Common myeloid progenitor, CD34-positive (primary cell): ENCODE measurements at regions of chr11 and their contacts with region 1.

Region 1: DNA sequence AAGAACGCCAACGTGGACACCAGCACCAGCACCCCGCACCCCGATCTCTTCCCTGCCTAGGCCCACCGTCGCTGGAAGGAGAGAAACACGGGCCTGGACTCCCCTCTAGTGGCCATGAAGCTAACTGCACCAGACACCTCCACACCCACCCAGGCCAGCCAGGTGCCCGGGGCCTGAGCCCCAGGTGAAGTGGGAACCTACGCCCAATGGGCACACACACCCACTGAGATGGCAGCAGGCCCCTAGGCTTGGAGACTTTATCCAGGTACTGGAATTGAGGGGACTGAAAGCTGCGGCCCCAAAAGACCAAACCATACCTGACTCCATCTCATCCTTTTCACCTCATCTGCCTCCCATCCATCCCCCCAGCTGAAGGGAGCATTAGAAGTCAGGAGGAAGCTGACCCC is 81.0 kb downstream of the BUD13 start:
- DNase-seq: peak; percentile 33 to 54 (median 44)
- H3K4me3 ChIP-seq: no peak overlapping the region
- H3K27ac ChIP-seq: no peak overlapping the region
- H3K4me1 ChIP-seq: peaks cover 0 to 12% (median 4%) of the 10 kb centered on the region in 4 experiments
- H3K27me3 ChIP-seq: no peaks in the 10 kb centered on the region

Region 2: GRCh38 chr11:116454020-116454645 is 237.6 kb before region 1 on chr11:
- CTCF ChIA-PET with region 1: interaction called, 10 read pairs
- POLR2A ChIA-PET with region 1: no interaction called
- DNase-seq: peak; percentile 22 to 57 (median 48)
- H3K4me3 ChIP-seq: no peak overlapping the region
- H3K27ac ChIP-seq: no peak overlapping the region
- H3K4me1 ChIP-seq: no peaks in the 10 kb centered on the region
- H3K27me3 ChIP-seq: peaks cover 0 to 7% (median 2%) of the 10 kb centered on the region in 5 experiments

Region 3: GRCh38 chr11:116513894-116514293 is 177.9 kb before region 1 on chr11:
- CTCF ChIA-PET with region 1: interaction called, 18 read pairs
- POLR2A ChIA-PET with region 1: no interaction called
- DNase-seq: peak; percentile 36 to 60 (median 59)
- H3K4me3 ChIP-seq: no peak overlapping the region
- H3K27ac ChIP-seq: no peak overlapping the region
- H3K4me1 ChIP-seq: no peaks in the 10 kb centered on the region
- H3K27me3 ChIP-seq: peaks cover 0 to 8% (median 3%) of the 10 kb centered on the region in 5 experiments

Region 4: DNA sequence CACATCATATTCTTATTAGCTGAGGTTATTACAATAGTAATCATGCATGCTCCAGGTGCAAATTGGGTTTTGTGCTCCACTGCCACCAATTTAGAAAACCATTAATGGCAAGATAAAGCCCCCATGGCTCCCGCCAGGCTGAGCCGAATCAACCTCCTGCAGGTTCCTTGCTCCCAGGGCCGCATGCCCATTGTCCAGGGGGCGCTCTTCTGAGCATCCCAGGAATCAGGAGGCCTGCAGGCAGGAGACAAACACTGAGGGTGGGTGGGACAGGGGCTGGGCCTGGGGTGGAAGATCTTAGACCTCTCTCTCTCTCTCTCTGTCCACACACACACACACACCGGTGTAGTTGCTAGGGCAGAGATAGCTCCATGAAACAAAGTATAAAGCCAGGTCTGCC is 23.6 kb after region 1 on chr11:
- CTCF ChIA-PET with region 1: no interaction called
- POLR2A ChIA-PET with region 1: no interaction called
- DNase-seq: no peak
- H3K4me3 ChIP-seq: no peak overlapping the region
- H3K27ac ChIP-seq: no peak overlapping the region
- H3K4me1 ChIP-seq: no peaks in the 10 kb centered on the region
- H3K27me3 ChIP-seq: peaks cover 0 to 9% (median 5%) of the 10 kb centered on the region in 5 experiments

Region 5: DNA sequence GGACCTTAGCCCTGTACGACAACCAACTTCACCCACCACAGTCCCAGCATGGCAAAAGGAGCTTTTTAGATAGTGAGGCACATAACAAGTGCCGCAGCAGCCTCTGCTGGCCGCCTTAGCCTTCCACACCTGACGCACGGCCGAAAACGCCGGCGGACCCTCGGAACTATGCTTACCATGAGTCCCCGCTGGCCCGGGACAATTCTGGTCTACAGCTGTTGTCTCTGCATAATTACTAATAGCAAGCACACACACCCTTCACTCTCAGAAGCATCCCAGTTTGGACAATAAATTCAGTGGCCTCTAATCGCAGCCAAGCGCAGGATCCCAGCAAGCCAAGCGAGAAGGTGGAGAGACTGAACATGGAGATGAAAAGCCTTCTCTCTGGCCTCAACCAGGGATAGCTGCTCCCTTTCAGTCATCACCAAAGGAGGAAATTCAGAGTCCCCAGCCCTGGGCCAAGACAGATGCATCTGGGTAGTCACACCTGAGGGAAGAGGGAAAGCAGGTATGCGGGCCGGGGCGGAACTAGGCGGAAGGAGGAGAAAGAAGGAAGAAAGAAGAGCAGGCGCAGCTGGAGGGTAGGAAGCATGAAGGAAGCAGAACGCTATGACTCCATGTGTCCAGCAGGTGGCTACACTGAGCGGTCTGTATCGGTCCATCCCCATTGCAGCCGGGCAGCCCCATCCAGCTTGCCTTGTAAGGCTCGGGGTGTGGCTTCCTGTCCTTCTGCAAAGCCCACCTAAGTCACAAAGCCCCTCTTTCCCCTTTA is 40.7 kb after region 1 on chr11:
- CTCF ChIA-PET with region 1: no interaction called
- POLR2A ChIA-PET with region 1: no interaction called
- DNase-seq: peak; percentile 50 to 62 (median 56)
- H3K4me3 ChIP-seq: no peak overlapping the region
- H3K27ac ChIP-seq: no peak overlapping the region
- H3K4me1 ChIP-seq: peaks cover 0 to 22% (median 15%) of the 10 kb centered on the region in 4 experiments
- H3K27me3 ChIP-seq: peaks cover 0 to 4% (median 2%) of the 10 kb centered on the region in 5 experiments

Region 6: DNA sequence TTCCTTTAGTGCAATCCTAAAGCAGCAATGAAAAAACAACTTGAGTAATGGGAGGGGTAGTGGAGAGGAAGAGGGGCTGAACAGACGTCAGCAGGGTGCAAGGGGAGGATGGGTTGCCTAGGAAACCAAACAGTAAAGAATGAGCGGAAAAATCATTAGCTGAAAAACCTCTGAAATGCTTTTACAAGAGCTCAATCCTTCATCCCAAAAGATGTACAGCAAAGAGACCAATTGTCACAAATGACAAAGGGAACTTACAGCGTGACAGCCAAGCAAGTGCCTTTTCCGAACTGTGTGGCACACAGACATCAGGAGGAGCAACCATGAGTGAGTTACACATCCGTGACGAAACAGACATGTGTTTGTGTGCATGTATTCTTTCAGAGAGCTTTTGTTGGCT is 301.8 kb after region 1 on chr11:
- CTCF ChIA-PET with region 1: no interaction called
- POLR2A ChIA-PET with region 1: no interaction called
- DNase-seq: peak; percentile 84 to 86 (median 84)
- H3K4me3 ChIP-seq: peak overlapping the region in 4 of 7 experiments; percentile 13 to 64 (median 20)
- H3K27ac ChIP-seq: peak overlapping the region; percentile 92 to 94
- H3K4me1 ChIP-seq: peaks cover 9 to 45% (median 21%) of the 10 kb centered on the region in 4 experiments
- H3K27me3 ChIP-seq: no peaks in the 10 kb centered on the region